Ovary (tissue), 10 donors: ENCODE measurements at regions of chr15 and their contacts with region 1.

Region 1: DNA sequence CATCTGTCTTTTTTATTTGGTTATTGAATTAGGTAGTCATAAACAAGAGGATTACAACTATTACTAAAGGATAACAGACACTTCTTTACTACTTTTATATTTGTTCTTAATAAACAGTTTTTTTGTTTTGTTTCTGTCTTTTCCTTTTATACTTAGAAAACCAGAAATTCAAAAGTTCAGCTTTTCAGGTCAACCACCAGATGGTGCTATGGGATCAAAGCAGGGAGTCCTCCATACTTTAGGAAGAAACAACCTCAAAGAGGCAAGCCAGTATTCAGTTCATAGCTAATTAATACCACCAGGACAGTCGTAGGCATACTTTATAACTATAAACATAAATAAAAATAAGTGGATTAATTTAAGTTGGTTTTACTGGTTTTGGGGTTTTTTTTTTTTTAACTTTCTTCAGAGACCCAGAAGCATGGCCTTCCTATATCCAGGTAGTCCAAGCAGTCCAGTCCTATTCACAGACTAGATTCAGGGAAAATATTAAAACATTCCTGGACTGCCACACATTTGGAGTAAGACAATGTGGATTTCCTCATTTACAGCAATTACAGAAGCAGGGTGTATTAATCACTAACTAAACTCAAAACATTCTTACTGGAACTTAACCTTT is 16.0 kb upstream of the EID1 start:
- DNase-seq: peak in 2 of 5 donors; percentile 11 to 21
- H3K4me3 ChIP-seq: no peak overlapping the region
- H3K27ac ChIP-seq: no peak overlapping the region
- H3K4me1 ChIP-seq: no peaks in the 10 kb centered on the region
- H3K27me3 ChIP-seq: no peaks in the 10 kb centered on the region
- CTCF ChIP-seq: peak; percentile 45 to 93 (median 76)
- EP300 ChIP-seq: no peak
- POLR2A ChIP-seq: no peak

Region 2: DNA sequence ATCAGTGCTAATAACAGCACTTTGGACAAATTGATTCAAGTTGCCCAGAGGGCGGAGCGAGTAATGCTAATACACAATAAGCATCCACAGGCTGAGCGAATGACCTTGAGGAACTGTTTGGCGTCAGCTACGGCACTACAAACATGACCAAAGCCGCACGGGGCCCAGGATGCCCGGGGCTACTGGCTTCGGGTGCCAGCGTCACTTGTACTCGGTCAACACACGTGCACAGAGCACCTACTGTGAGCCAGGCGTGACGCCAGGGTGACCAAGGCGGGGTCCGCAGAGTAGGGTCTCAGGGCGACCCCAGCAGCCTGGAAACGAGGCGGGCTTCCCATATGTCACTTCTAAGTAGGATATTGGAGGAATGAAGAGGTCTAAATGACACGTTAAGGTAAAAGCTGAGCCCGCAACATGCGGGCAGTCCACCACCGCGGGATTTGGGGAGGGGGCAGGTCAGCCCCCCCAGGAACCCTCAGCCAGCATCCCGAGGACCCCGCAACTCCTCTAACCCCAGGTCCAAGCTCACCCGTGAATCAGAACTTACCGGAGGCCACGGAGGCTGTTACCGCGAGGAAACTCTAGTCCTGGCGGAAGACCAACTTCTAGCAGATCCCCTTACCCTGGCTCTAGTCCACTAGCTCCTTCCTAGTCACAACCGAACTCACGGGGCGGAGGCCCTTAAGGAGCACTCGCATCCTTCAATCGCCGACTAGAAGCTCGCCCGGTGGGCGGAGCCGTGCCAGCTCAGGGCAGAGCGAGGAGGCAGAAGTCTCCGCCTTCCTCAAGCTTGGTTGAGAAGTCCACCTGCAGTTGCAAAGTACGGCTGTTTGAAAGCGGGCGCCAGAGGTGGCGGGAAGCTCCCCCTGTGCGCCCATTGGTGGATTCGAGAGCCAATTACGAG is 51.3 kb before region 1 on chr15 and contains the start of gene CEP152:
- intact Hi-C with region 1: no loop called
- DNase-seq: peak; percentile 97 to 99 (median 98)
- H3K4me3 ChIP-seq: peak within 1 kb of the TSS; percentile 53
- H3K27ac ChIP-seq: peak within 1 kb of the TSS in 1 of 2 donors; percentile 19
- H3K4me1 ChIP-seq: peaks cover 2% of the 10 kb centered on the region
- H3K27me3 ChIP-seq: no peaks in the 10 kb centered on the region
- CTCF ChIP-seq: no peak
- EP300 ChIP-seq: no peak
- POLR2A ChIP-seq: no peak
- total RNA-seq, gene CEP152: 1.7 to 3.7 (median 2.5) TPM

Region 3: GRCh38 chr15:49135893-49136292 is 274.0 kb after region 1 on chr15:
- intact Hi-C with region 1: loop called in 1 of 4 experiments (anchors 10 kb)
- DNase-seq: no peak
- H3K4me3 ChIP-seq: no peak overlapping the region
- H3K27ac ChIP-seq: no peak overlapping the region
- H3K4me1 ChIP-seq: no peaks in the 10 kb centered on the region
- H3K27me3 ChIP-seq: no peaks in the 10 kb centered on the region
- CTCF ChIP-seq: no peak
- EP300 ChIP-seq: no peak
- POLR2A ChIP-seq: no peak

Region 4: DNA sequence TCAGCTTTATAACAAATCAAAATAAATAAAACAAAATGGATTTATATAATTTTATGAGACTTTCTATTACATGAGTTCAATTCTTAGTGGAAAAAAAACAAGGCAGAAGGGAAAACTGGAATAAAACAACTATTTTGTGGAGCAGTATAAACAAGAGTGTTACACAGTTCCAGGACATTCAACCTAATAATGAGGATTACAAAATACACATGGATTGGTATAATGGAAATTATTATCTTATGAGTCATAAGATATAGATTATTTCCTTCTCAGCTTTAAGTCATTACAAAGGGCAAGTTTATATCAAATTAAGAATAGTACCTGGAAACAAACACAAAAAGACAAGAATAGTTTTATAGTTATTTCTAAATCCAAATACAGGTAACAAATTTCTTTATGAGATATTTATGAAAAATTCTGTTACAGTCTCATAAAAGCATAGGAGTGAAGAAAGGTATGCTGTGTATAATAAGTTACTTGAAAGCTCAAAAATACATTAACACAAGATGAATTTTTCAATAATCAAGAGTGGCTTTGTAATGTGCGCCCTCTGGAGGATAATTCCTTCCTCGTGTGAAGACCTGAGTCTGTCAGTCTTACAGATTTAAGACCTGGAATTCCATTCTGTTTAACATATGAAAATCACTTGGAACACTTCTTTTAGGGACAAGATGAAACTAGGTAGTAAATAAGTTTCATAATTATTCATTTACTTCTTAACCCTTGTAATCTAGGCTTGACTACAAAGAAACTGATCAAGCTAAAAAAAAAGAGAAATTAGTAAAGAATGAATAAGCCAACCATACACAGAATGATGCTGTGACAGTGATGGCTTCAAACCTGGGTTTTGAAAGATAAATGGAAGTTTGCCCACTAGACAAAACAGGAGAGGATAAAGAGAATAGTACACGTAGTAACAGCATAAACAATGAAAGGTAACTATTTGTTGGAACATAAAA is 284.0 kb after region 1 on chr15:
- intact Hi-C with region 1: loop called in 1 of 4 experiments (anchors 5 kb)
- DNase-seq: no peak
- H3K4me3 ChIP-seq: no peak overlapping the region
- H3K27ac ChIP-seq: no peak overlapping the region
- H3K4me1 ChIP-seq: peaks cover 2% of the 10 kb centered on the region
- H3K27me3 ChIP-seq: no peaks in the 10 kb centered on the region
- CTCF ChIP-seq: peak in 1 of 3 donors; percentile 22
- EP300 ChIP-seq: no peak
- POLR2A ChIP-seq: no peak